ENCODE measurements at regions of chr14 and their contacts with region 1.

Region 1: DNA sequence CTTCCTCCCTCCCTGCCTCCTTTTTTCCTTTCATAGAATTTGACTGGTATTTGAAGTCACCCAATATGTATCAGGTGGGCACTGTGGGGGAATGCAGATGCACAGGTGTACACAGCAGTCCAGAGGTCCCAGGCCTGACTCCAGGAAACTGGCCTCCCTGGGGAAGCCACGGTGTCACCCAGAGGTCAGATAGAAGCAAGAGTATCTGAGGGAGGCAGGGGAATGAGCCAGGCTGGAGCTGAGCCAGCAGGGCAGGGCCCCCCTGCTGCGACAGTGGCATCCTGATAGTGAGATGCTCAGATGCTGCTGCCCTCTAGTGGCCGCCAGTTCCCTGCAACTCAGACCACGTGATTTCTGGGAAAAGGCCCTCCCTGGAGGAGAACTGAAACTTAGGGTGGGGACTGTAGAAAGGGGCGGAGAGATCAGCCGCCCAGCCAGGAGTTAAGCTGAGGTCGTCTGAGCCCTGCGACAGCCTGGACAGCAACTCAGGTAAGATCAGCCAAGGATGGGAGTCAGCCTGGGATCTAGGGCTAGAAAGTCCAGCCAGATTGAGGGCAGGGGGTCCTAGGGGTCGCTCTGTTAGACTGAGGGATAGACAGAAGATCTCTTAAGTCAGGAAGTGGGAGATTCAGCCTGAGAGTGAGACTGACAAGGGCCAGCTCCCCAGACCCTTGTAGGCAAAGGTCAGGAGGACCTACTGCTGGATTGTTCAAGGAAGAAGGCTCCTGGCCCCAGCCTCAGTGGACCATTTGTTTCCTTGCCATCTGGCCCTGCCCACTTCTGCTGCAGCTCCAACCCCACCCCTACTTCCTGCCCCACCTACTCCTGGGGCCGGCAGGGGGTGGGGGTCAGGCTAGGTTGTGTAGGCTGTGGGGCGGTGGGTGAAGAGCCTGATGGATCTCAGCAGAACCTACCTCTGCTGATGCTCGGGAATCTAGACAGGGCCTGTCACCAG is at the start of gene IRF9:
- DNase-seq: peak; percentile 95
- H3K4me3 Mint-ChIP-seq: peak within 1 kb of the TSS; percentile 88
- H3K27ac Mint-ChIP-seq: peak within 1 kb of the TSS; percentile 91
- H3K4me1 Mint-ChIP-seq: peaks cover 11% of the 10 kb centered on the region
- H3K27me3 Mint-ChIP-seq: no peaks in the 10 kb centered on the region
- CTCF ChIP-seq: peak; percentile 84
- total RNA-seq, gene IRF9: 13.6 and 23.8 TPM in 2 replicates

Region 2: GRCh38 chr14:23675906-23676305 is 485.2 kb before region 1 on chr14:
- CTCF ChIA-PET with region 1: no interaction called
- POLR2A ChIA-PET with region 1: no interaction called
- intact Hi-C with region 1: no loop called
- DNase-seq: no peak
- H3K4me3 Mint-ChIP-seq: no peak overlapping the region
- H3K27ac Mint-ChIP-seq: no peak overlapping the region
- H3K4me1 Mint-ChIP-seq: peaks cover under 1% of the 10 kb centered on the region
- H3K27me3 Mint-ChIP-seq: peaks cover 36% of the 10 kb centered on the region
- CTCF ChIP-seq: no peak

Region 3: DNA sequence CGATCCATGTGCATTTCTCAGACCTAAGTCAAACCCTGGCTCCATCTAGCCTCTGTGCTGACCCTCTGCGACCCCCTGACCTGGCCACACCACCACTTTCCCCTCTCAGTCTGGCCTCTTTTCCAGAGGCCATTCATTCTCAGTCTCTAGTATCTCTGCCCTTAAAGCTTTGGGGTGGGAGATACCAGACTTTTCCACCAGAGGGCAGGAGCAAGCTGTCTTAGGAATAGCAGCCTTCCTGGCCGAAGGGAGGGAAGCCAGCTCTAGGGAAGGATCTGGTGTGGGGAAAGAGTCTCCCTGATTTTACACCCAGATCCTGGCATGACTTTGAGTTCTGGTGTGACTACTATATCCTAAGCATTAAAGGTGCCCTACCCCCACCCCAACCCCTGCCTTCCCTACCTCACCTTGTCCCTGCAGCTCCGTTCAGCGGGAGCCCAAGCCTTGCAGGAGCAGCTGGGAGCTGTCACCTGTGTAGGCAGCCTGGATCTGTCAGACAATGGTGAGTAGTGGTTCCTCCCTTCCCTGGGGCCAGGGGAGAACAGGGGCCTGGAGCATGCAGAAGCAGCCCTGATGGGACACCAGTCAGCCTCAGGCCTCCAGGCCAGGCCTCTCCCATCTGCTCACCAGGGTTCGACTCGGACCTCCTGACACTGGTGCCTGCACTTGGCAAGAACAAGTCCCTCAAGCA is 102.7 kb before region 1 on chr14:
- CTCF ChIA-PET with region 1: interaction called, 4 read pairs
- POLR2A ChIA-PET with region 1: no interaction called
- intact Hi-C with region 1: loop called (anchors 1 kb)
- DNase-seq: peak; percentile 66
- H3K4me3 Mint-ChIP-seq: no peak overlapping the region
- H3K27ac Mint-ChIP-seq: no peak overlapping the region
- H3K4me1 Mint-ChIP-seq: peaks cover 4% of the 10 kb centered on the region
- H3K27me3 Mint-ChIP-seq: peaks cover 48% of the 10 kb centered on the region
- CTCF ChIP-seq: peak; percentile 49

Region 4: GRCh38 chr14:24114536-24115450 is 46.3 kb before region 1 on chr14 and contains the starts of genes DCAF11 and NRL:
- CTCF ChIA-PET with region 1: interaction called, 48 read pairs
- POLR2A ChIA-PET with region 1: interaction called, 12 read pairs
- intact Hi-C with region 1: no loop called
- DNase-seq: peak; percentile 100
- H3K4me3 Mint-ChIP-seq: peak within 1 kb of the TSS; percentile 97
- H3K27ac Mint-ChIP-seq: peak within 1 kb of the TSS; percentile 99
- H3K4me1 Mint-ChIP-seq: peaks cover 9% of the 10 kb centered on the region
- H3K27me3 Mint-ChIP-seq: no peaks in the 10 kb centered on the region
- CTCF ChIP-seq: no peak
- total RNA-seq, gene DCAF11: 38.6 and 48.8 TPM in 2 replicates
- total RNA-seq, gene NRL: 1.3 and 2.1 TPM in 2 replicates

Region 5: GRCh38 chr14:24141097-24141880 is 19.8 kb before region 1 on chr14 and contains the start of gene EMC9:
- CTCF ChIA-PET with region 1: interaction called, 141 read pairs
- POLR2A ChIA-PET with region 1: interaction called, 30 read pairs
- intact Hi-C with region 1: loop called (anchors 2 kb)
- DNase-seq: peak; percentile 100
- H3K4me3 Mint-ChIP-seq: peak within 1 kb of the TSS; percentile 93
- H3K27ac Mint-ChIP-seq: peak within 1 kb of the TSS; percentile 64
- H3K4me1 Mint-ChIP-seq: peaks cover 21% of the 10 kb centered on the region
- H3K27me3 Mint-ChIP-seq: no peaks in the 10 kb centered on the region
- CTCF ChIP-seq: peak; percentile 14
- total RNA-seq, gene EMC9: 49.2 and 49.9 TPM in 2 replicates

Region 6: GRCh38 chr14:24171422-24172260 is 10.5 kb after region 1 on chr14 and contains the start of gene REC8:
- CTCF ChIA-PET with region 1: interaction called, 21 read pairs
- POLR2A ChIA-PET with region 1: interaction called, 3 read pairs
- intact Hi-C with region 1: no loop called
- DNase-seq: no peak
- H3K4me3 Mint-ChIP-seq: no peak within 1 kb of the TSS
- H3K27ac Mint-ChIP-seq: no peak within 1 kb of the TSS
- H3K4me1 Mint-ChIP-seq: peaks cover 8% of the 10 kb centered on the region
- H3K27me3 Mint-ChIP-seq: no peaks in the 10 kb centered on the region
- CTCF ChIP-seq: no peak
- total RNA-seq, gene REC8: 6.1 and 12.1 TPM in 2 replicates

Region 7: GRCh38 chr14:24188251-24189058 is 27.3 kb after region 1 on chr14 and contains the start of gene IPO4:
- CTCF ChIA-PET with region 1: interaction called, 51 read pairs
- POLR2A ChIA-PET with region 1: interaction called, 6 read pairs
- intact Hi-C with region 1: no loop called
- DNase-seq: peak; percentile 97
- H3K4me3 Mint-ChIP-seq: peak within 1 kb of the TSS; percentile 81
- H3K27ac Mint-ChIP-seq: peak within 1 kb of the TSS; percentile 84
- H3K4me1 Mint-ChIP-seq: peaks cover 12% of the 10 kb centered on the region
- H3K27me3 Mint-ChIP-seq: no peaks in the 10 kb centered on the region
- CTCF ChIP-seq: no peak
- total RNA-seq, gene IPO4: 57.2 and 100 TPM in 2 replicates

Region 8: DNA sequence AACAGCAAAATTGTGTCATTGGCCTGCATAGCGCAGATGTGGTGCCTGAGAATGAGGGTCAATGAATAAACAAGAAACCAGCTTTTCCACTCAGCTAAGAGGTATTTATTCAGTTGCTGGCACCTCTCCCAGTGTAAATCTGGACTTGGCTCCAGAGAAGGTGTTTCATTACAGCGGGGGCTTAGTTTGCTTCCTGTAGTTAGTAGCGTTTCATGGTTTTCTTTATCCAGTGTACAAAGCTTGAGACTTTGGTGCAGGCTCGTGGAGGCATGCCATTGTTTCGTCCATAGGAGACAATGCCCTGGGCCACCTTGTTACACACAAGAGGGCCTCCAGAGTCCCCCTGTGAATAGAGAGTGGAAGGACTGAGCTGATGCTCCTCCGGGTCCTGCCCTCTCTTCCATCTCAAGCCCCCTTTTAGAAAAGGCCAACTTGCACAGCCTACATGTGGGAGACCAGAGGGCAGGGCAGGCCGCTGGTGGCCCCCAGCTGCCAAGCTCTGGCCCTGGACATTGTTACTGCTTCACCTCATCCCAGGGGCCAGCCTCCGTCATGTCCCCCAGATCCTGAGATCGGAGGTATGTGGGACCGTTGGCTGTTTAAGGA is 469.8 kb after region 1 on chr14:
- CTCF ChIA-PET with region 1: no interaction called
- POLR2A ChIA-PET with region 1: no interaction called
- intact Hi-C with region 1: no loop called
- DNase-seq: peak; percentile 26
- H3K4me3 Mint-ChIP-seq: no peak overlapping the region
- H3K27ac Mint-ChIP-seq: no peak overlapping the region
- H3K4me1 Mint-ChIP-seq: no peaks in the 10 kb centered on the region
- H3K27me3 Mint-ChIP-seq: no peaks in the 10 kb centered on the region
- CTCF ChIP-seq: no peak

Measured in MCF 10A (cell line).